Right ventricle myocardium inferior (tissue), 1 donor: ENCODE measurements at regions of chr2 and their contacts with region 1.

Region 1: GRCh38 chr2:117603567-117603966 is 210.9 kb upstream of the DDX18 start:
- DNase-seq: no peak
- ATAC-seq: no peak

Region 2: GRCh38 chr2:117618607-117619006 is 15.0 kb after region 1 on chr2:
- intact Hi-C with region 1: loop called (anchors 1 kb)
- DNase-seq: no peak
- ATAC-seq: no peak